Activated naive CD4-positive, alpha-beta T cell treated with anti-CD3 and anti-CD28 coated beads for 36 hours (primary cell): ENCODE measurements at regions of chr19 and their contacts with region 1.

Region 1: DNA sequence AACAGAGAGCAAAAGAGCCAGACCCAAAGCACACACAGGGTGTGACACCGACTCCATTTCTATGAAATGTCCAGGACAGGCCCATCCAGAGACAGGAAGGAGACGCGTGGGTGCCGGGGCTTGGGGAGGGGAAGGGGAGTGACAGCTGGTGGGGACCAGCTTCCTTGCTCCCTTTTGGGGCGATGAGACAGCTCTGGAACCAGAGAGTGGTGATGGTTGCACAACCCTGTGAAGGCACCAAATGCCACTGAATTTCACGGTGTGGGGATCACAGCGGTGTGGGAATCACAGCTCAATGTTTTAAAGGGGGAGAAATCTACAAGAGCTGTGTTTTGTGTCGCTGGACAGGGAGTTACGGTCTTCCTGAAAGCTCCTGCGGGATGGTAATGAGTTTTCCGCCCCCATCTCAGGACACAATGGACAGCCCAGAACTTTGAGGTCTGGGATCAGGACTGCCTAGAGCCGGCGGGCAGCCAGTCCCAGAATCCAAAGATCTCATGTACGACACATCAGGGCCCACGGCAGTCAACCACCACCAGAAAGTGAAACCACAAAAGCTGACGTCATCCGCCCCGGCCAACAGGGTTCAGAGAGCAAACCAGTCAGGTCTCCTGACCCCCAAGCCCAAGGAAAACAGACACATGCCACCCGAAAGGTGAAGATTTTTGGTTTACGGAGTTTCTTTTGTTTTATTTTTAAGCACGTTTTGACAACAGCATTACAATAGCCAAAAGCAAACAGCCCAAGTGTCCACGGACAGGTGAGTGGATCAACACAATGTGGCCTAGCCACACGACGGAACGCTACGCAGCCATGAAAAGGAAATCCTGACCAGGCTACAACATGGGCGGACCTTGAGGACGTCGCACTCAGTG is 7.3 kb downstream of the SGTA start:
- DNase-seq: peak; percentile 83
- H3K4me3 Mint-ChIP-seq: peak overlapping the region; percentile 59
- H3K27ac Mint-ChIP-seq: peak overlapping the region; percentile 84
- H3K4me1 Mint-ChIP-seq: peaks cover 45% of the 10 kb centered on the region
- H3K27me3 Mint-ChIP-seq: no peaks in the 10 kb centered on the region

Region 2: GRCh38 chr19:2661615-2662014 is 114.2 kb before region 1 on chr19:
- CTCF ChIA-PET with region 1: no interaction called
- intact Hi-C with region 1: no loop called
- DNase-seq: peak; percentile 61
- H3K4me3 Mint-ChIP-seq: no peak overlapping the region
- H3K27ac Mint-ChIP-seq: no peak overlapping the region
- H3K4me1 Mint-ChIP-seq: no peaks in the 10 kb centered on the region
- H3K27me3 Mint-ChIP-seq: no peaks in the 10 kb centered on the region

Region 3: GRCh38 chr19:2739602-2740313 is 36.0 kb before region 1 on chr19 and contains the start of gene SLC39A3:
- CTCF ChIA-PET with region 1: no interaction called
- intact Hi-C with region 1: loop called (anchors 2 kb)
- DNase-seq: peak; percentile 100
- H3K4me3 Mint-ChIP-seq: peak within 1 kb of the TSS; percentile 89
- H3K27ac Mint-ChIP-seq: peak within 1 kb of the TSS; percentile 21
- H3K4me1 Mint-ChIP-seq: peaks cover 19% of the 10 kb centered on the region
- H3K27me3 Mint-ChIP-seq: peaks cover 4% of the 10 kb centered on the region
- total RNA-seq, gene SLC39A3: 20.1 to 23.2 TPM

Region 4: DNA sequence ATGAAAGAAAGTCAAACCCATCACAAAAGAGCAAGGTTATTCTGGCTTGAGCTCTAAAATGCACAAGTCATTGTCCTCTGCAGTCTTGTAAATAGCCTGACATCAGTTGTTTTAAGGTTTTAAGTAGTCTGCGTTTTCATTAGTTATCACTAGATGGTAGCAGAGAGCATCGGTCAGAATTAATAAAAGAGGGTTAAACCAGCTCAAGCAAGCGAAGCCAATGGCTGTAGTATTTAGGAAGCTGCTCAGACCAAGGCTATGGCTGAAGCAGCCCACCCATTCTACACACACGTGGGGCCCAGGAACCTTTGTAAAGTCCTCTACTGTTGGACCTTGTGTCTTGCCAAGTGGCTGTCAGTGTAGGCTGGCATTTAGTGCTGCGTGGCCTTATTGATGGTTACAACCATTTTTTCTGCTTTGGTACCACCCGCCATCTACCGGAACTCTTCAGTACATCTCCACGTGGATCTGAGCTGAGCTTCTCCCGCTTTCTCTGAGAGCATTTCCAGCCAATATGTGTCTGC is 111.7 kb after region 1 on chr19:
- CTCF ChIA-PET with region 1: no interaction called
- intact Hi-C with region 1: no loop called
- DNase-seq: peak; percentile 17
- H3K4me3 Mint-ChIP-seq: peak overlapping the region; percentile 20
- H3K27ac Mint-ChIP-seq: peak overlapping the region; percentile 50
- H3K4me1 Mint-ChIP-seq: peaks cover 18% of the 10 kb centered on the region
- H3K27me3 Mint-ChIP-seq: no peaks in the 10 kb centered on the region